GM12878 (cell line): ENCODE measurements at regions of chr1 and their contacts with region 1.

Region 1: DNA sequence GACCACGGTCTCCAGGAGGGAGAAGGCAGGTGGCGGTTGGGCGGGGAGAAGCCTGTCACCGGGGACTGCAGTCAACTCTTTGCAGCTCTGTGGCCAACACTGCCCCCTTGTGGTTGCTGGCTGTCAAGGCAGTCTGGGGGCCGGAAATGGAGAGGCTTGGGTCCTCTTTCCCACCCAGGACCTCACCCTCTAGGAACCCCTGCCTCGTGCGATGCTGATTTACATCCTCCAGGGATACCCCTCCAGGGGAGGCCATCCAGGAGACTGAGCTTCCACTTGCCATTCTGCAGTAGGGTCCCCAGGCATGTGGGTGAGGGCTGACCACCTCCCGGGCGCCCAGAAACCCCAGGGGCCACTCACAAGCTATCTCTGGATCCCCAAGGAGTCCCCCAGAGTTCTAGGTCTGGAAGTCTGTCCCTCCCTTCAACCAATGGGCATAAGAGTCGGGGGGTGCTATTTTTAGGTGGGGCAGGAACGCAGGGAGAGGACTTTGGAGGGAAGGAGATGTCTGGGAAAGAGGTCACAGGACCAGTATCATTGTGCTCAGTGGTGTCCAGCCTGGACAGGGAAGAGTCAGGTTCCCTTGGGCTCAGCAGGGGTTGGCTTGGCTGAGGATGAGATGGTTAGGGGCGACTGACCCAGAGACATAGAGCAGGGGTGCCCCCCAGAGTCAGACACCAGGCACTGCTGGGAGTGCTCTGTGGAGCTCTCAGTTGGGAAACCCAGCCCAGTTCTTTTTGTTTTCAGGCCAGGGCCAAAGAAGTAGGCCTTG is 7.1 kb upstream of the GPR61 start:
- DNase-seq: no peak
- ATAC-seq: peak; percentile 93
- H3K4me3 ChIP-seq: peak overlapping the region; percentile 41; the same call in 1 of the 2 replicates
- H3K27ac ChIP-seq: peak overlapping the region; percentile 56
- H3K4me1 ChIP-seq: peaks cover 14% of the 10 kb centered on the region
- H3K27me3 ChIP-seq: no peaks in the 10 kb centered on the region
- CTCF ChIP-seq: peak; percentile 96 to 99 (median 97)
- EP300 ChIP-seq: no peak
- POLR2A ChIP-seq: no peak
- RAD21 ChIP-seq: peak; percentile 92

Region 2: DNA sequence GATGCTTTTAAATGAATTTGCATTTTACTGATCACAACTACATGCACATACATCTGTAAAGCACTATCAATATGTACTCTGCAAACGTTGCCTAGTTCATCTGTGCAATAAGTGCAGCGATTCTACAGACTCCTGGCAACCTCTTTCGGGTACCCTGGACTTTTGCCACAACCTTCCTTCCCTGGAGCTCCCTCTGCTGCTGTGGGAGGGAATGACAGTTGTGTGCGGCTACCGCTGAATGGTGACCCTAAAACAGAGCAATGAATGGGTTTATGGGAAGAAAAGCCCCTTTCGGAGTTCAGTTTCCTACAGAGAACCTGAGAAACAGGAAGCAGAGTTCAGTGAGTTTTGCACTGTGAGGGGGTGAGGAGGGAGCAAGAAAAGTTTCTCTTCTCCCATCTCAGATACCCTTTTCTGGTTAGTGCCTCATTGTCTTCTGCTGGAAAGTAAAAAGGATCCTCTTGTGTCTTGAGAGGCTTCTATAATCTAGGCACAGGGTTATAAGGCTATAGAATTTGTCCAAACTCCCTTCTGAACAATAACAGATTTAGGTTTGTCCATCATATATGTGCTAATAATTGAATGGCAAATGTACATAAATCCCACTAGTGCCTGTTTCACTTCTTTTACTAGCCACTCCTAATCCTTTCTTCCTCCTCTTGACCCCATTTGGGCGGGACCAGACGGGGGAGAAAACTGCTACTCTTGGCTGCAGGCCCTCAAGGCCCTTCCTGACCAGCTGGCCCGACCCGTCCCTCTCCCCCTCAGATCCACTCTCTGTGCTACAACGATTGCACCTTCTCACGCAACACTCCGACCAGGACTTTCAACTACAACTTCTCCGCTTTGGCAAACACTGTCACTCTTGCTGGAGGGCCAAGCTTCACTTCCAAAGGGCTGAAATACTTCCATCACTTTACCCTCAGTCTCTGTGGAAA is 338.6 kb before region 1 on chr1:
- CTCF ChIA-PET with region 1: interaction called, 13 read pairs
- POLR2A ChIA-PET with region 1: no interaction called
- RAD21 ChIA-PET with region 1: interaction called, 3 read pairs
- SMC1A ChIA-PET with region 1: interaction called, 4 read pairs
- in situ Hi-C with region 1: no loop called
- intact Hi-C with region 1: no loop called
- DNase-seq: peak; percentile 37
- ATAC-seq: peak; percentile 89
- H3K4me3 ChIP-seq: no peak overlapping the region
- H3K27ac ChIP-seq: no peak overlapping the region
- H3K4me1 ChIP-seq: no peaks in the 10 kb centered on the region; the same call in 1 of the 2 replicates
- H3K27me3 ChIP-seq: no peaks in the 10 kb centered on the region
- CTCF ChIP-seq: peak; percentile 82 to 90 (median 87)
- EP300 ChIP-seq: no peak
- POLR2A ChIP-seq: no peak
- RAD21 ChIP-seq: peak; percentile 79

Region 3: GRCh38 chr1:109253484-109254141 is 278.9 kb before region 1 on chr1:
- CTCF ChIA-PET with region 1: interaction called, 11 read pairs
- POLR2A ChIA-PET with region 1: interaction called, 3 read pairs
- RAD21 ChIA-PET with region 1: no interaction called
- SMC1A ChIA-PET with region 1: no interaction called
- in situ Hi-C with region 1: no loop called
- intact Hi-C with region 1: no loop called
- DNase-seq: no peak
- ATAC-seq: peak; percentile 71
- H3K4me3 ChIP-seq: no peak overlapping the region
- H3K27ac ChIP-seq: no peak overlapping the region
- H3K4me1 ChIP-seq: no peaks in the 10 kb centered on the region
- H3K27me3 ChIP-seq: peaks cover 2 to 4% of the 10 kb centered on the region in 2 experiments; a peak in 3 of 4 replicates
- CTCF ChIP-seq: no peak
- EP300 ChIP-seq: no peak
- POLR2A ChIP-seq: no peak
- RAD21 ChIP-seq: no peak

Region 4: DNA sequence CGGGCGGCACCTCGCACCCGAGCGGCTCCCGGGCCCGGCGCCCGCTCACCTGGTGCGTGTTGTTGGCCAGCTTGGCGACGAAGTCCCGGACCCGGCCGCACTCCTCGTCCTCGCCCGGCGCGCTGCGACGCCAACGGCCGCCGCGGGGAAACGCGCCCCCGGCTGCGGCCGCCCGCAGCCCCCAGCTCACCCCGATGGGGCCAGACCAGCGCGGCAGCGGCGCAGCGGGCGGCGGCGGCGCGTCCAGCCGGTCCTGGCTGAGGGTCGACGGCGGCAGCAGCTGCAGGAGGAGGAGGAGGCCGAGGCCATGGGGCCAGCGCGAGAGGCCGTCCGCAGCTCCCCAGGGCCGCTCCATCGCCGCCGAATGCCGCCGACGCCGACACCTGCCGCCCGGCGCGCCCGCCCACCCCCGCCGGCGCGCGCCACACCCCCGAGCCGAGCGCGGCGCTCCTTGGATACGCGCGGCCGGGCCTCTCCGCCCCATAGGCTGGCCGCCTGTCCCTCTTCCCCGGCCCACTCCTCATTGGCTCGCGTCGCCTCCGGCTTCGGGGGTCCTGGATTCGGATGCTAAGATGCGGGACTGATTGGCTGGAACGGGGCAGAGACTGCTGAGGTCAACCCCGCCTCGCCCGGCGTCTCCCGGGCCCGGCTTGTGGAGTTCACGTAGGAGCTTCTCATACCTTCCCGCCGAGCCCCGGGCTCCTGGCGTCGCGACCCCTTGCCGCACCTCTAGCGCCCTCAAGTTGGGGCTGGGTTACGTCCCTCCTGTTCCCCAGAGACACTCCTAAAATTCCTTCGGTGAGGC is 134.8 kb before region 1 on chr1 and contains the start of gene SORT1:
- CTCF ChIA-PET with region 1: interaction called, 90 read pairs
- POLR2A ChIA-PET with region 1: no interaction called
- RAD21 ChIA-PET with region 1: interaction called, 25 read pairs
- SMC1A ChIA-PET with region 1: interaction called, 38 read pairs
- in situ Hi-C with region 1: no loop called
- intact Hi-C with region 1: loop called (anchors 2 kb)
- DNase-seq: no peak
- ATAC-seq: peak; percentile 96
- H3K4me3 ChIP-seq: peak within 1 kb of the TSS; percentile 55
- H3K27ac ChIP-seq: no peak within 1 kb of the TSS
- H3K4me1 ChIP-seq: peaks cover 3% of the 10 kb centered on the region
- H3K27me3 ChIP-seq: peaks cover 1 to 4% of the 10 kb centered on the region in 2 experiments; a peak in 3 of 4 replicates
- CTCF ChIP-seq: no peak
- EP300 ChIP-seq: no peak
- POLR2A ChIP-seq: peak; percentile 39; the same call in 1 of the 2 replicates
- RAD21 ChIP-seq: no peak
- polyA plus RNA-seq, gene SORT1: 0.06 to 0.16 TPM

Region 5: DNA sequence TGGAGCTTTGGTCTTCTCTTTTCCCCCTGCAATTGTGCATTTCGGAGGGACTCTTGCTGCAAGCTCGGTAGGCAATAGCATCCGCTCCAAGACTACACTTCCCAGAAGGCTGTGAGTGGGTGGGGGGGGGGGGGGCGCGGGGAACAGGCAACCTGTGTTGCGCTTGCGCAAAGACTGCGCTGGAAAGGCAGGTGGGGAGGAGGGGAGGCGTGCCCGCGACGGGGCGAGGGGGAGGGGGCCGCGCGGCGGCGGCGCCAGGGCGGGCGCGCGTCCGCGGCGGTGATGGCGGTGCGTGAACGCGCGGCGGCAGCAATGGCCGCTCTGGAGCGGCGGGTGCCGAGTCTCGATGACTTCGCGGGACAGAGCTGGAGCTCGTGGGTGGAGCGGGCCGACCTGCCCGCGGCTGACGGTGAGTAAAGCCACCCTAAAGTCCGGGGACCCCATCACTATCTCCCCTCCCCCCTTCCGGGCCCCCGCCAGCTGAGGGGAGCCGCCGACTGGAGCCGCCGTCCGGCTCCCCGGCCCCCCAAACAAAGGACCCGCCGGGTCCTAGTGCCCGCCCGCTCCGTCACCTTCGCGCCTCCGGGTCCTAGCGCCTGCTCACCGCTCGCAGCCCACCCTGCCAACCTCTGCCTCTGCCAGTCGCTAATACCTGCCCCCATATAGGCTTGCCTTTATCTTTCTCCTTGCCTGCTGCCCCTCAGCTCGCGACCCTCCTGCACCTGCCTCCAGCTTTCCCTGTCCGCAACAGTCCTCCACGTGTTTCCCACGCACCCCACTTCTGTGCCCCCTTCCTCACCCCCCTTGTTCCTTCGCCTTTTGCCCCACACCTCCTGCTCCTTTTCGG is 48.7 kb before region 1 on chr1 and contains the start of gene ATXN7L2:
- CTCF ChIA-PET with region 1: interaction called, 1,280 read pairs
- POLR2A ChIA-PET with region 1: interaction called, 26 read pairs
- RAD21 ChIA-PET with region 1: interaction called, 422 read pairs
- SMC1A ChIA-PET with region 1: interaction called, 431 read pairs
- in situ Hi-C with region 1: no loop called
- intact Hi-C with region 1: no loop called
- DNase-seq: peak; percentile 42
- ATAC-seq: peak; percentile 86
- H3K4me3 ChIP-seq: peak within 1 kb of the TSS; percentile 74
- H3K27ac ChIP-seq: peak within 1 kb of the TSS; percentile 73
- H3K4me1 ChIP-seq: peaks cover 10% of the 10 kb centered on the region
- H3K27me3 ChIP-seq: peaks cover 0 to 3% of the 10 kb centered on the region in 2 experiments; a peak in 3 of 4 replicates
- CTCF ChIP-seq: no peak; a peak in 1 of 6 replicates
- EP300 ChIP-seq: 0 out of 4 replicates have a peak, but pooled peaks of 1 of the 2 experiments have one; percentile 0
- POLR2A ChIP-seq: peak; percentile 91
- RAD21 ChIP-seq: no peak
- polyA plus RNA-seq, gene ATXN7L2: 0.27 to 0.80 TPM

Region 6: GRCh38 chr1:109516872-109517271 is 15.7 kb before region 1 on chr1:
- CTCF ChIA-PET with region 1: interaction called, 1,280 read pairs
- POLR2A ChIA-PET with region 1: interaction called, 10 read pairs
- RAD21 ChIA-PET with region 1: interaction called, 21 read pairs
- SMC1A ChIA-PET with region 1: interaction called, 205 read pairs
- in situ Hi-C with region 1: no loop called
- intact Hi-C with region 1: no loop called
- DNase-seq: no peak
- ATAC-seq: no peak
- H3K4me3 ChIP-seq: no peak overlapping the region
- H3K27ac ChIP-seq: no peak overlapping the region
- H3K4me1 ChIP-seq: no peaks in the 10 kb centered on the region
- H3K27me3 ChIP-seq: no peaks in the 10 kb centered on the region; a peak in 2 of 4 replicates
- CTCF ChIP-seq: no peak
- EP300 ChIP-seq: no peak
- POLR2A ChIP-seq: no peak
- RAD21 ChIP-seq: no peak